ENCODE measurements at regions of chr20 and their contacts with region 1.

Region 1: DNA sequence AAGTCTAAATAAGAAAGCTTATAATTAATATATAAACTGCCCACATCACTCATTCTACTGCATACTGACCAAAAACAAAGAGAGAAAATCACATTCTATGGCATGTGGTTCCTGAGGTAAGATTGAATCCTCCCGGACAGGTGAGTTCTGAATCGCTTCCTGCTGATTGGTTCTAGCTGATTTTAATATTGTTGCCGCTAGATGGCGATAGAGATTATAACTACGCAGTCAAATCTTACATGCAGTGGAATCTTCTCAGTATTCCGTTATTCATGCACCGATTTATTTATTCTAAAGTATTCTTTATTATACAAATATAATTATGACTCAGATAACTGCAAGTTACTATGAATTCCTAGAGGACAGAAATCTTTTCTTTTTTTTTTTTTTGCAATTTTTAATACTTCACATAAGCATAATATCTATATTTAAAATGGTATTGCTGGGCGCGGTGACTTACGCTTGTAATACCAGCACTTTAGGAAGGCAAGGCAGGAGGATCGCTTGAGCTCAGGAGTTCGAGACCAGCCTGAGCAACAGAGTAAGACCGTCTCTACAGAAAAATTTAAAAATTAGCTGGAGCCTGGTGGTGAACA is 24.2 kb upstream of the TMX4 start:
- DNase-seq: peak; percentile 65
- H3K4me3 Mint-ChIP-seq: no peak overlapping the region
- H3K27ac Mint-ChIP-seq: no peak overlapping the region
- H3K4me1 Mint-ChIP-seq: no peaks in the 10 kb centered on the region
- H3K27me3 Mint-ChIP-seq: peaks cover 14% of the 10 kb centered on the region
- CTCF ChIP-seq: peak; percentile 65

Region 2: DNA sequence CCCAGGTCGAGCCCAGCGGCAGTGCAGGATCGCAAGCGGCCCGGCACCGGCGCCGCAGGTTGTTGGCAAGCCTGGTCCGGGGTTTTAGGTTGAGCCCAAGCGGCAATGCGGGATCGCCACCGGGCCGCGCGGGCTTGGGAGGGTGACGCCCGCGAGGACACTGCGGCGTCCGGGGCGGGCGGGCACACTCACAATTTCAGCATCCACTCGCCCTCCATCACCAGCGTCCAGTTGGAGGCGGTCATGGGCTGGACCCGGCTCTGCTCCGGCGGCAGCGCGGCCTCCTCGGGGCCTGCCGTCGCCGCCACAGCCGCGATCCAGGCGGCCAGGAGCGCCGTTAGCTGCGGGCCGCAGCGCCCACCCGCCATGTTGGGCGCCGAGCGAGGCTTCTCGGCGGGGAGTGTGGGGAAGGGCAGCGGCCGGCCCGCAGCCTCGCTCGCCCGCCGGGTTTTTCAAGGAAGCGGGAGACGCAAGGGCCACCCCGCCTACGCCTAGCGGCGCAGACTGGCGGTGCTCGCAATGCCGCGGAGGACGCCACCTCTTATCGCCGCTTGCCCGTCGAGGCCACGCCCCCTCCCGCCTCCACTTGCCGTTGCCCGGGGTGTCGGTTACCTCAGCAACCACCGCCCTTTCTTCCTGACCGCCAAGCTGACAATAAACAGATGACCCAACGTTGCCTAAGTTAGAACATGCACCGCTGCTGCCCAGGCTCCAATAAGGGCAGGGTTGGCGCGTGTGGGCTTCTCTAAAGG is 24.4 kb before region 1 on chr20 and contains the start of gene TMX4:
- CTCF ChIA-PET with region 1: interaction called, 26 read pairs
- POLR2A ChIA-PET with region 1: interaction called, 3 read pairs
- intact Hi-C with region 1: no loop called
- DNase-seq: peak; percentile 95
- H3K4me3 Mint-ChIP-seq: peak within 1 kb of the TSS; percentile 92
- H3K27ac Mint-ChIP-seq: peak within 1 kb of the TSS; percentile 68
- H3K4me1 Mint-ChIP-seq: peaks cover 13% of the 10 kb centered on the region
- H3K27me3 Mint-ChIP-seq: no peaks in the 10 kb centered on the region
- CTCF ChIP-seq: peak; percentile 17
- total RNA-seq, gene TMX4: 47.4 and 60.5 TPM in 2 replicates

Region 3: DNA sequence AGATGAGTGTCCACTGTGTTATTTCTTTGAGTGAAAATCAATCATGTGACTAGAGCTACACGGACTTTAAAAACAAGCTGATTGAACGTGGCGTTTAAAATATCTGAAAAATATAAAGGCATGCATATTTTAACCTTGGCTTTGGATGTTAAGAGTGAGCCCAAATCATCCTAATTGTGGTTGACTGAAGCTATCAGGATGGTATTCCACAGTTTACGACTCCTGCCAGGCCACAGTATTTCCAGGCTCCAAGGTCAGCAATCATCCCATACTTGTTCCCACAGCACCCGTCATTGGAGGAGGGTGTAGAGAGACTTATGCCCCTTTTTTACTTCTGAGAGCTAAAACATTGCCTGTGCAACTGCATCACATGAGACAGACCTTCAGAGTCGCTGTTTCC is 19.0 kb after region 1 on chr20:
- CTCF ChIA-PET with region 1: interaction called, 16 read pairs
- POLR2A ChIA-PET with region 1: no interaction called
- intact Hi-C with region 1: no loop called
- DNase-seq: no peak
- H3K4me3 Mint-ChIP-seq: no peak overlapping the region
- H3K27ac Mint-ChIP-seq: no peak overlapping the region
- H3K4me1 Mint-ChIP-seq: no peaks in the 10 kb centered on the region
- H3K27me3 Mint-ChIP-seq: no peaks in the 10 kb centered on the region
- CTCF ChIP-seq: no peak

Region 4: GRCh38 chr20:8299921-8300320 is 256.1 kb after region 1 on chr20:
- CTCF ChIA-PET with region 1: interaction called, 5 read pairs
- POLR2A ChIA-PET with region 1: no interaction called
- intact Hi-C with region 1: loop called (anchors 5 kb)
- DNase-seq: peak; percentile 11
- H3K4me3 Mint-ChIP-seq: no peak overlapping the region
- H3K27ac Mint-ChIP-seq: no peak overlapping the region
- H3K4me1 Mint-ChIP-seq: no peaks in the 10 kb centered on the region
- H3K27me3 Mint-ChIP-seq: no peaks in the 10 kb centered on the region
- CTCF ChIP-seq: no peak

Region 5: GRCh38 chr20:8535403-8536261 is 491.8 kb after region 1 on chr20:
- CTCF ChIA-PET with region 1: interaction called, 5 read pairs
- POLR2A ChIA-PET with region 1: no interaction called
- intact Hi-C with region 1: loop called (anchors 1 kb)
- DNase-seq: peak; percentile 38
- H3K4me3 Mint-ChIP-seq: no peak overlapping the region
- H3K27ac Mint-ChIP-seq: no peak overlapping the region
- H3K4me1 Mint-ChIP-seq: peaks cover 5% of the 10 kb centered on the region
- H3K27me3 Mint-ChIP-seq: no peaks in the 10 kb centered on the region
- CTCF ChIP-seq: peak; percentile 42